GM10248 (cell line): ENCODE measurements at regions of chr3 and their contacts with region 1.

Region 1: DNA sequence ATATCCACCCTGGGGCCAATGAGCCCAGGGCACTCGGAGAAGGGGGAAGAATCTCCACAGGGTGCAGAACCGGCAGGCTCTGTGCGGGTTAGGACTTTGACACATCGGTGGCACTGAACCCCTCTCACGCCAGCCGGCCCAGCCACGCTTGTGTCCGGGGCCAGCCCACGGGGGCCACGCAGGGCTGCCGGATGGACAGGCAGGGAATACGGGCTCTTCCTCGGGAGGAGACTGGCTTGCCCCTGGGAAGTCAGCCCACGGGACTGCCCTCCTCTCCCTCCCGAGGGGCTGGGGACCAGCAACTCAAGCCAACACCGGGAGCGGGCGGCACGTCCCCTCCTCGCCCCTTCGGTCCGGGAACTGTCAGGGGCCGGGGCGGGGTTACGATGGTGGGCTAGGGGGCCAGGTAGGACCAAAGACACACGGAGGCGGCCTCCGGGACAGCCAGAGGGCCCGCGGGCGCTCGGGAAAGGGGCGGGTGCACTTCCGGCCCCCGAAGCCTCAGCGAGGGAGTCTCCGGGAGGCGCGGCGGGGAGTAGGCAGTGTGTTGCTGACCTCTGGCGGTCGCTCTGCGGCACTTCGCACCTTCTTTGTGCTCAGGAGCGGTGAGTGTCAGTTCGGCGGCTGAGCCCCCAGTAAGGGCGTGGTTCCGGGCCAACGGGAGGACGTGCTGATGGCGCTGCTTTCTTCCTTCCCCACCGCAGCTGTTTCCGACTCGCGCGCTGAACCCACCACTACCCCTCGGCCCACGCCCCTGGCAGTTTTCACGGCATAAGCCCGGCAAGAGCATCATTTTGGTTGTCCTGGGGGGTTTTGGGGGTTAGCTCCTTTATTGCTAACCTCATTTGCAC is 5.1 kb upstream of the CYP8B1 start:
- DNase-seq: peak; percentile 94
- CTCF ChIP-seq: peak; percentile 95

Region 2: GRCh38 chr3:42780892-42781700 is 99.7 kb before region 1 on chr3:
- CTCF ChIA-PET with region 1: interaction called, 20 read pairs
- POLR2A ChIA-PET with region 1: no interaction called
- DNase-seq: peak; percentile 60
- CTCF ChIP-seq: peak; percentile 58

Region 3: GRCh38 chr3:42790714-42791229 is 90.1 kb before region 1 on chr3:
- CTCF ChIA-PET with region 1: interaction called, 10 read pairs
- POLR2A ChIA-PET with region 1: no interaction called
- DNase-seq: no peak
- CTCF ChIP-seq: no peak

Region 4: DNA sequence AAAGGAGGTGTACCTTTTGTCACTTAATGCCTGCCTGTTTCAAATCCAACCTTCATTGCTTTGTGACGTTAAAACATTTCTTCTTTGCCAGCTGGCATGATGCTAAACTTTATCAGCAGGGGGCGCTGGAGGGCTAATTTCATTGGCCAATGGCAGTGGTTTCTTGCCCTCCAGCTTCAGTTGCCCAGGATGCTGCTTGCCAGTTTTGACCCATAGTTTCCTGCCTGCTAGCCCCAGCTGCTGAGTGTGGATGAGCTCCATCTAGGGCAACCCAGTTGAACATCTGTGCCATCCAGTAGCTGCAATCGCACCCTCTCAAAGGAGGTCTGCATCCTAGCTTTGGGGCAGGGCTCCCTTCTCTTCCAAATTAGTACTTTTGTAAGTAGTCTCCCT is 49.5 kb before region 1 on chr3:
- CTCF ChIA-PET with region 1: interaction called, 25 read pairs
- POLR2A ChIA-PET with region 1: no interaction called
- DNase-seq: peak; percentile 61
- CTCF ChIP-seq: peak; percentile 77

Region 5: DNA sequence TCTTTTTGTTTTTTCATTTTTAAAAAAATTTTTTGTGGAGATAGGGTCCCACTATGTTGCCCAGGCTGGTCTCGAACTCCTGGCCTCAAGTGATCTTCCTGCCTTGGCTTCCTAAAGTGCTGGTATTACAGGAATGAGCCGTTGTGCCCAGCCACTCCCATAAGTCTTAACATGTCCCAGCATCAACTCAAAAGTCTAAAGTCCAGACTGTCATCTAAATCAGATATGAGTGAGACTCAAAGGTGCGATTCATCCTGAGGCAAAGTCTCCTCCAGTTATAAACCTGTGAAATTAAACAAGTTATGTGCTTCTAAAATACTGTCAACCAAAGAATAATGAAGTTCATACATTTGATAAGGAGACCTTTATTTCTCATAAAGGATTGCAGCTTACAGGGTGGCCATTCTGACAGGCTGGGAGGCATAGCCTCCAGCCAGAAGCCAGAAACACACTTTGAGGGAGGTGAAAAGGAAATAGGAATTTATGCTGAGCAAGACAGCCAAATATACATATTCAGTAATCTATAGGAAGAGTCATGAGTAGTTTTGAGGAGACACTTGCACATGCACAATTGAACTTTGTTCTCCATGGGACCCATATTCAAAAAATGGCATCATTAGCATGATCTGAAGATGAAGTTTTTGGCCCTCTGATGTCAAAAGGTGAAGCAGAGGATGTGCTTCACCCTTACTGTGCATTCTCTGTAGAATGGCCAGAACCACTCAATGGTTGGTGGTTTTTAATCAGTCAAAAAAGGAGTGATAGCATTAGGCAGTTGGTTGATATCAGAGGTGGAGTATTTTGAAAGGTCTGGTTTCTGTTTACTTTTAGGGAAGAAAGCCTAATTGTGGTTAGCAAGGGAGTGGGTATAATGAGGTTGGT is 14.1 kb after region 1 on chr3:
- CTCF ChIA-PET with region 1: interaction called, 33 read pairs
- POLR2A ChIA-PET with region 1: no interaction called
- DNase-seq: no peak
- CTCF ChIP-seq: no peak

Region 6: DNA sequence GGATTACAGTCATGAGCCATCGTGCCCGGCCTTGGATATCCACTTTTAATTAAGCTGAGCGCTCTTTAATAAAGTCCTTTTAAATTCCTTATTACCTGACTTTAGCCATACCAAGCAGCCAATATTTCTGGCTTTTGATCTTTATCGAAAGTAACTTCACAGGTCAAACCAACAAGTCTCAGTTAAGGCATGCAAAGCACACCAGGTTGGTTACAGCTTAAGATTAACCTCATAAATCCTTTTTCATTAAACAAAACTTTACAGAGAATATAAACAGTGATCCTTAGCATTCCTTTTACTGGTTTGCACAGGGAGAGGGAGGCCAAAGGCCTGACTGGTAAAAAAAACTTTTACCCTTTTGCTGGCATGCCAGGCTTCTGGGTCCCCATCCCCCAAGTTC is 42.8 kb after region 1 on chr3:
- CTCF ChIA-PET with region 1: no interaction called
- POLR2A ChIA-PET with region 1: no interaction called
- DNase-seq: no peak
- CTCF ChIP-seq: no peak